K562 (cell line): ENCODE measurements at regions of chr9 and their contacts with region 1.

Region 1: GRCh38 chr9:127244609-127245601 is 19.7 kb upstream of the GARNL3 start:
- DNase-seq: peak; percentile 95 to 97 (median 95)
- ATAC-seq: peak; percentile 100
- H3K4me3 ChIP-seq: peak overlapping the region; percentile 50
- H3K27ac ChIP-seq: peak overlapping the region; percentile 38
- H3K4me1 ChIP-seq: peaks cover 3 to 10% of the 10 kb centered on the region in 2 experiments; a peak in 4 of 5 replicates
- H3K27me3 ChIP-seq: no peaks in the 10 kb centered on the region; a peak in 1 of 5 replicates
- CTCF ChIP-seq: no peak
- EP300 ChIP-seq: no peak
- POLR2A ChIP-seq: peak; percentile 86
- RAD21 ChIP-seq: no peak

Region 2: DNA sequence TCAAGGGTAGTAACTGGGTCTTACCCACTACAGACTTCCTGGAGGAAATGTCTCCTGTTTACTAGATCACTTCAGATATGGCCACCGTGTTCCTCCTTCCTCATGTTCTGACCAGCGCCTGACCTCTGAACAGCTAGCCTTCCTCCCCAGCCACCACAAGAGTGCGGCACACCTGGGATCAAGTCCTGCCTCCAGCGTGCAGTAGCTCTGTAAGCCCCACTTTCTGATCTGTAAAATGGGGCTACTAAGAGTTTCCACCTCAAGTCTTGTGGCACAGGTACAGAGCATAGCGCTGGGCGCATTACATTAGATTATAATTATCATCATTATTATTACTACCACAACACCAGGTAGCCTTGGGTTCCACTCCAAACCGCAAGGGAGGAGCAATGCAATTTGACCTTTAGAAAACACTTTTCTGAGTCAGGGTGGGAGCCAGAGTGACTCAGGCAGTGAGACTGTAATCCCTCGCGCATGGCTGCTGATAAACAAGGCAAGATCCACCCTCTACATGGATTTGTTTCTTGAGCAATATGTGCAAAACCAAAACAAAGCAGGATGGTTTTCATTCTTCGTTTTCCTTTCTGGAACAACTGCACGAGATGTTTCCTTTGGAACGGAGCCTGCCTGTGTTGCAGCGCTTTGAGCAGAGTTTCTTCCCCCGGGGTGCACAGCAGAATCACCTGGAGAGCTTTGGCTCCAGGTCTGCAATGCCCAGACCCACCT is 57.5 kb before region 1 on chr9:
- CTCF ChIA-PET with region 1: no interaction called
- POLR2A ChIA-PET with region 1: no interaction called
- in situ Hi-C with region 1: no loop called
- intact Hi-C with region 1: loop called (anchors 10 kb)
- DNase-seq: peak; percentile 62 to 79 (median 72)
- ATAC-seq: peak; percentile 93
- H3K4me3 ChIP-seq: no peak overlapping the region
- H3K27ac ChIP-seq: peak overlapping the region; percentile 31; the same call in 2 of the 3 replicates
- H3K4me1 ChIP-seq: peaks cover 13 to 17% of the 10 kb centered on the region in 2 experiments; a peak in 4 of 5 replicates
- H3K27me3 ChIP-seq: peaks cover 2 to 15% of the 10 kb centered on the region in 2 experiments; a peak in 3 of 5 replicates
- CTCF ChIP-seq: no peak
- EP300 ChIP-seq: peak; percentile 57
- POLR2A ChIP-seq: no peak
- RAD21 ChIP-seq: no peak

Region 3: DNA sequence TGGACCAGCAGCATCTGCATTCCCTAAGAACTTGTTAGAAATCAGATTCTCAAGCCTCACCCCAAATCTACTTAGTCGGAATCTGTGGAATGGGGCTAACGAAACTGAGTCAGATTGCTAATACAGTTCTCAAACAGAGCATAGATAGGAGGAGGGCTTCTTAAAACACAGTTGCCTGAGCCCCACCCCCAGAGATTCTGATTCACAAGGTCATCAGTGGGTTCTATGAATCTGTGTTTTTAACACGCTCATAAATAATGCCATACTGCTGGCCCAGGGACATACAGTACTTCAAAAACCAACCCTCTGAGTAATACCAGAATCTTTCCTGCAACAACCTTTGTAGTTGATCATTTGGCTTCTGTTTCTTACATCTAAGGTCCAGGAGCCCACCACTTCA is 13.2 kb before region 1 on chr9:
- CTCF ChIA-PET with region 1: no interaction called
- POLR2A ChIA-PET with region 1: no interaction called
- in situ Hi-C with region 1: no loop called
- intact Hi-C with region 1: no loop called
- DNase-seq: no peak
- ATAC-seq: no peak
- H3K4me3 ChIP-seq: no peak overlapping the region
- H3K27ac ChIP-seq: no peak overlapping the region
- H3K4me1 ChIP-seq: no peaks in the 10 kb centered on the region
- H3K27me3 ChIP-seq: peaks cover 0 to 8% of the 10 kb centered on the region in 2 experiments; a peak in 1 of 5 replicates
- CTCF ChIP-seq: no peak
- EP300 ChIP-seq: no peak
- POLR2A ChIP-seq: no peak
- RAD21 ChIP-seq: no peak